Endothelial cell of umbilical vein (primary cell): ENCODE measurements at regions of chr5 and their contacts with region 1.

Region 1: GRCh38 chr5:178075840-178076548 is 37.3 kb upstream of the N4BP3 start:
- DNase-seq: peak; percentile 73
- H3K4me3 ChIP-seq: peak overlapping the region in 1 of 3 experiments; percentile 20
- H3K27ac ChIP-seq: no peak overlapping the region
- H3K4me1 ChIP-seq: no peaks in the 10 kb centered on the region
- H3K27me3 ChIP-seq: no peaks in the 10 kb centered on the region
- CTCF ChIP-seq: peak; percentile 83 to 91
- POLR2A ChIP-seq: no peak

Region 2: GRCh38 chr5:177370488-177371119 is 705.4 kb before region 1 on chr5:
- CTCF ChIA-PET with region 1: no interaction called
- POLR2A ChIA-PET with region 1: no interaction called
- dilution Hi-C with region 1: no loop called
- intact Hi-C with region 1: no loop called
- DNase-seq: peak; percentile 90
- H3K4me3 ChIP-seq: peak overlapping the region in 1 of 3 experiments; percentile 29
- H3K27ac ChIP-seq: no peak overlapping the region
- H3K4me1 ChIP-seq: peaks cover 28% of the 10 kb centered on the region
- H3K27me3 ChIP-seq: no peaks in the 10 kb centered on the region
- CTCF ChIP-seq: peak; percentile 52 to 81
- POLR2A ChIP-seq: no peak

Region 3: GRCh38 chr5:178058321-178059012 is 17.5 kb before region 1 on chr5:
- CTCF ChIA-PET with region 1: interaction called, 10 read pairs
- POLR2A ChIA-PET with region 1: no interaction called
- dilution Hi-C with region 1: no loop called
- intact Hi-C with region 1: no loop called
- DNase-seq: no peak
- H3K4me3 ChIP-seq: no peak overlapping the region
- H3K27ac ChIP-seq: no peak overlapping the region
- H3K4me1 ChIP-seq: no peaks in the 10 kb centered on the region
- H3K27me3 ChIP-seq: peaks cover 0 to 3% of the 10 kb centered on the region in 2 experiments
- CTCF ChIP-seq: no peak
- POLR2A ChIP-seq: no peak

Region 4: DNA sequence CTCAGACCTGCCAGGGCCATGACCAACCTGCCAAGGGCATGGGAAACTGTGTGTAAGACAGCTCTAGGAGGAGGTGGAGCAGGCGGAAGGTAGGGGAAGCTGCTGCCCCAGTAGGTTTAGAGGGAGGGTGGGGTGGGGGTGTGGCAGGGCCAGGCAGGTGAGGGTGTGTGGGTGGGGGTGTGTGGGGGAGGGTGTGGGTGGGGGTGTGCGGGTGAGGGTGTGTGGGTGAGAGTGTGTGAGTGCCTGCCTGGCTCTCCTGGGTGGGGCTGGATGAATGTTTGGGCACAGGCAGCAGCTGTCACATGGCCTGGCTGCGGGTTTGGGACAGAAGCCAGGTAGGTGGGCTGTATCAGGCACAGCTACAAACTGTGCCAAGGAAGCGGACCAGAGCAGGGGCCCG is 28.5 kb after region 1 on chr5:
- CTCF ChIA-PET with region 1: interaction called, 26 read pairs
- POLR2A ChIA-PET with region 1: no interaction called
- dilution Hi-C with region 1: no loop called
- intact Hi-C with region 1: no loop called
- DNase-seq: no peak
- H3K4me3 ChIP-seq: no peak overlapping the region
- H3K27ac ChIP-seq: no peak overlapping the region
- H3K4me1 ChIP-seq: no peaks in the 10 kb centered on the region
- H3K27me3 ChIP-seq: no peaks in the 10 kb centered on the region
- CTCF ChIP-seq: no peak
- POLR2A ChIP-seq: no peak

Region 5: GRCh38 chr5:178120868-178121357 is 44.9 kb after region 1 on chr5:
- CTCF ChIA-PET with region 1: interaction called, 14 read pairs
- POLR2A ChIA-PET with region 1: no interaction called
- dilution Hi-C with region 1: no loop called
- intact Hi-C with region 1: no loop called
- DNase-seq: peak; percentile 23
- H3K4me3 ChIP-seq: no peak overlapping the region
- H3K27ac ChIP-seq: no peak overlapping the region
- H3K4me1 ChIP-seq: peaks cover 32% of the 10 kb centered on the region
- H3K27me3 ChIP-seq: no peaks in the 10 kb centered on the region
- CTCF ChIP-seq: peak; percentile 27 to 40
- POLR2A ChIP-seq: no peak

Region 6: GRCh38 chr5:178137991-178138390 is 62.0 kb after region 1 on chr5:
- CTCF ChIA-PET with region 1: interaction called, 200 read pairs
- POLR2A ChIA-PET with region 1: no interaction called
- dilution Hi-C with region 1: no loop called
- intact Hi-C with region 1: no loop called
- DNase-seq: no peak
- H3K4me3 ChIP-seq: no peak overlapping the region
- H3K27ac ChIP-seq: no peak overlapping the region
- H3K4me1 ChIP-seq: no peaks in the 10 kb centered on the region
- H3K27me3 ChIP-seq: no peaks in the 10 kb centered on the region
- CTCF ChIP-seq: no peak
- POLR2A ChIP-seq: no peak

Region 7: GRCh38 chr5:178153573-178154343 is 77.8 kb after region 1 on chr5 and contains the start of gene NHP2:
- CTCF ChIA-PET with region 1: interaction called, 200 read pairs
- POLR2A ChIA-PET with region 1: no interaction called
- dilution Hi-C with region 1: no loop called
- intact Hi-C with region 1: no loop called
- DNase-seq: peak; percentile 99
- H3K4me3 ChIP-seq: peak within 1 kb of the TSS; percentile 47 to 79 (median 71)
- H3K27ac ChIP-seq: peak within 1 kb of the TSS; percentile 14
- H3K4me1 ChIP-seq: peaks cover 6% of the 10 kb centered on the region
- H3K27me3 ChIP-seq: no peaks in the 10 kb centered on the region
- CTCF ChIP-seq: no peak
- POLR2A ChIP-seq: peak; percentile 50
- total RNA-seq, gene NHP2: 205 and 210 TPM in 2 replicates

Region 8: DNA sequence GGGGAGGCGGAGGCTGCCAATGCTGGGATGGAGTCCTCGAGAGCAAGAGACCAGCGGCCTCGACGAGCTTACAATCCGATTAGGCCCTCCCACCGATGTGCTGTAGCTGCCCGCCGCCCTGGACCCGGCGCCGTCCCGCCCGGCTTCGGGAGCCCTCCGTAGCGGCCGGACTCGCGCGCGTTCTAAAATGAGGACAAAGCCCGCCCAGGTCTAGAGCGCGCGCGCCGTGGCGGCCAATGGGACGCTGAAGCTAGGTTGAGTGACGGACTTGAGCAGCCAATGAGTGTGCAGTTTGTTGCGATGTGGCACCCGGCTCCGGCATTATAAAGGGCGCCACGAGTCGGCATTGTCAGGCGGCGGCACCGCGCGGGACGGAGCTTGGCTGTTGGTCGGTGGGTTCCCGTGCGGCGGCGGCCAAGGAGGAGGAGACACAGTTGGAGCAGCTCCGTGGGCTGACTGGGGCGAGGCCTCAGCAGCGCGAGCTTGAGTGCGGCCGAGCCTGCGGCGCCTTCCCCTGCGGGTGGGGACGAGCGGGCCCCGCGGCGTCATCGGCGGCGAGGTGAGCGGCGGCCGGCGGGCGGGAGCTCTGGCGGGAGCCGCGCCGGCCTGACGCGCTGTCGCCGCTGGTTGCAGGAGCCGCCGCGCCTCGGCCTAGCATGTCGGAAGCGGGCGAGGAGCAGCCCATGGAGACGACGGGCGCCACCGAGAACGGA is 128.3 kb after region 1 on chr5 and contains the start of gene HNRNPAB:
- CTCF ChIA-PET with region 1: interaction called, 9 read pairs
- POLR2A ChIA-PET with region 1: interaction called, 7 read pairs
- dilution Hi-C with region 1: no loop called
- intact Hi-C with region 1: loop called (anchors 1 kb)
- DNase-seq: peak; percentile 96
- H3K4me3 ChIP-seq: peak within 1 kb of the TSS; percentile 66 to 93 (median 81)
- H3K27ac ChIP-seq: peak within 1 kb of the TSS; percentile 65
- H3K4me1 ChIP-seq: peaks cover 22% of the 10 kb centered on the region
- H3K27me3 ChIP-seq: no peaks in the 10 kb centered on the region
- CTCF ChIP-seq: no peak
- POLR2A ChIP-seq: peak; percentile 100
- total RNA-seq, gene HNRNPAB: 309 and 310 TPM in 2 replicates